ENCODE measurements at regions of chr20 and their contacts with region 1.

Region 1: DNA sequence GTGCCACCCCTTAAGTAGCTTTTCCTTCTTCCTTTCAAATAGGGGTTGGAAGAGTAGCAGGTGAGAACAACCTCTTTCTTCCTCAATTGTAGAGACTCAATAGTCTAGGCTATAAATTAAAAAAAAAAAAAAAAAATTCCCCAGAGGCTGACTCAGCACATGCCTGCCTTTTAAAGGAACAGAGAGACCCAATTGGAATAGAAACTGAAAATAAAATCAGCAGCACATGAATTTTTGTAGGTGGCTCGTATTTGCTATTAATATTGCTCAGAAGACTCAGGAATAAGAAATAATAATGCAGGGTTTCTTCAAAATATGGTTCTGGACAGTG is 19.3 kb downstream of the TOP1 start:
- DNase-seq: peak; percentile 51
- H3K4me3 ChIP-seq: peak overlapping the region; percentile 44
- H3K27ac ChIP-seq: peak overlapping the region; percentile 71
- H3K4me1 ChIP-seq: peaks cover 89% of the 10 kb centered on the region
- CTCF ChIP-seq: no peak

Region 2: DNA sequence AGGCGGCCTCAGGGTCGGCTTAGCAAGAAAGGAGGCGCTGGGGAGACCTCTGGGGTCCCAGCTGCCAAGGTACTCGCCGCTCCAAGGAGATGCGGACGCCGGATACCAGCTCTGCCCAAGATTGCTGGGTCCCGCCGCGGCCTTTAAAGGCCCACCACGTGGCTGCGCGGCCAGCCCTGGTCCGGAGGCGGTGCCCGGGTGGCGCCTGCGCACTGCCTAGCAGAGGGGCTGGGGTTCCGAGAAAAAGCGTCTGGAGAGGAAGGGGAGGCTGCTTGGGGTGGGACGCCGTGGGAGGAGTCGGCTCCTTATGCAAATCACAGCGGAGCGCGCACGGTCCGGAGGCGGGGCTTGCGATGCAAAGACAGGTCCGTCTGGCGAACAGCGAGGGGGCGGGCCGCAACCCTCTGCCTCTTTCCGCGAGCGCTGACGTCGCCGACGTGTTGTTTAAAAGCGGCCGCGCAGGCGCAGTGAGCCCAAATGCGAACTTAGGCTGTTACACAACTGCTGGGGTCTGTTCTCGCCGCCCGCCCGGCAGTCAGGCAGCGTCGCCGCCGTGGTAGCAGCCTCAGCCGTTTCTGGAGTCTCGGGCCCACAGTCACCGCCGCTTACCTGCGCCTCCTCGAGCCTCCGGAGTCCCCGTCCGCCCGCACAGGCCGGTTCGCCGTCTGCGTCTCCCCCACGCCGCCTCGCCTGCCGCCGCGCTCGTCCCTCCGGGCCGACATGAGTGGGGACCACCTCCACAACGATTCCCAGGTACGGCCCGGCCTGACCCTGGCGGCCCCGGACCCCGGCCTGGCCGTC is 19.4 kb before region 1 on chr20 and contains the start of gene TOP1:
- CTCF ChIA-PET with region 1: no interaction called
- POLR2A ChIA-PET with region 1: interaction called, 52 read pairs
- intact Hi-C with region 1: no loop called
- DNase-seq: peak; percentile 100
- H3K4me3 ChIP-seq: peak within 1 kb of the TSS; percentile 88
- H3K27ac ChIP-seq: peak within 1 kb of the TSS; percentile 54
- H3K4me1 ChIP-seq: peaks cover 61% of the 10 kb centered on the region
- CTCF ChIP-seq: no peak
- total RNA-seq, gene TOP1: 44.6 and 53.0 TPM in 2 replicates

Region 3: DNA sequence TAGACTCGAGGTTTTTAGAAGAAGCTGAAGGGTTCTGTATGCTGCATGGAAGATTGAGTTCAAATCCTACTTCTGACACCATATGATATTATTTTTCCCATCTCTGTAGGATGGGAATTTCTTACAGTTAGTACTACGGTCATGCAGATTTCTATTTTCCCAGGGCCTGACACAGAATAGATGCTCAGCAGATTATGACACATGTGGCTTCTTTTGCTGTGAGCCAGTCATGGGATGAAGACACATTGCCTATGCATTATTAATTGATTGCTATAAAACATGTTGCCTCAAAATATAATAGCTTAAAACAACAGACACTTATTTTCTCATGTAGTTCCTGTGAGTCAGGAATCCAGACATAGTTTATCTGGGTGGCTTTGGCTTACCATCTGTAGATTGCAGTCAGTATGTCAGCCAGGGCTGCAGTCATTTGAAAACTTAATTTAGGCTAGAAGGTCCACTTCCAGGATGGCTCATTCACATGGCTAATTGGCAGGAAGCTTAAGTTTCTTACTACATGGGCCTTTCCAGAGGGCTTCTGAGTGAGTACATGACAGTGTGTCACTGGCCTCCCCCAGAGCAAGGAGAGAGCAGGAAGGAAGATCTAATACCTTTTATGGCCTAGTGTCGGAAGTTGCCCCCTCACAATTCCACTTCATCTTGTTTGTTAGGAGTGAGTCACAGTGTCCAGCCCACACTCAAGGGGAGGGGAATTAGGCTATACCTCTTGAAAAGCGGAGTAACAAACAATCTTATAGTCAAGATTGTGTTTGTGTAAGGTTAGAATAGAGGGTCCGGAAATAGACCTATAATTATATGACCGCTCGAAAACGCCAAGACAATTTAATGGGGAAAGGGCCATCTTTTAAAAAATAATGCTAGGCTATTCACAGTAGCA is 10.3 kb after region 1 on chr20:
- CTCF ChIA-PET with region 1: no interaction called
- POLR2A ChIA-PET with region 1: interaction called, 11 read pairs
- intact Hi-C with region 1: no loop called
- DNase-seq: no peak
- H3K4me3 ChIP-seq: no peak overlapping the region
- H3K27ac ChIP-seq: no peak overlapping the region
- H3K4me1 ChIP-seq: peaks cover 45% of the 10 kb centered on the region
- CTCF ChIP-seq: no peak